ENCODE measurements at regions of chr15 and their contacts with region 1.

Region 1: GRCh38 chr15:72011302-72011942 is 106.5 kb downstream of the MYO9A start:
- DNase-seq: no peak
- H3K4me3 ChIP-seq: no peak overlapping the region
- H3K27ac ChIP-seq: no peak overlapping the region
- H3K4me1 ChIP-seq: no peaks in the 10 kb centered on the region
- H3K27me3 ChIP-seq: no peaks in the 10 kb centered on the region
- CTCF ChIP-seq: no peak
- POLR2A ChIP-seq: no peak

Region 2: GRCh38 chr15:71916834-71917233 is 94.6 kb before region 1 on chr15:
- intact Hi-C with region 1: no loop called
- DNase-seq: no peak
- H3K4me3 ChIP-seq: no peak overlapping the region
- H3K27ac ChIP-seq: no peak overlapping the region
- H3K4me1 ChIP-seq: no peaks in the 10 kb centered on the region
- H3K27me3 ChIP-seq: no peaks in the 10 kb centered on the region
- CTCF ChIP-seq: no peak
- POLR2A ChIP-seq: no peak

Region 3: DNA sequence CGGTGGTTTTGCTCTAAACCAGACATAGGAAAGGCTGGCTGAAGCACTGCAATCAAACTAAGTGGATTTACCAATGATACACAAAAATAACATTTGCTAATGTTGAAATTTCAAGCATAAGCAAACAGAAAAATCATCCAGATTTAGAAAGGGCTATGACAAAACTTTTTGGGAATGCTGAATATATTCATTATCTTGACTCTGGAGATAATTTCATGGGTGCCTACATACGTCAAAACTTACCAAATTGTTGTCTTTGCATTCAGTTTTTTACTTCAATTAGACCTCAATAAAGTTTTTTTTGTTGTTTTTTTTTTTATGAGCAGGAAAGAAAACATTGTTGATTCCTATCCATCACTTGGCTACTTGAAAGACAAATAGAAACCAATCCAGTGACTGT is 60.3 kb before region 1 on chr15:
- intact Hi-C with region 1: loop called (anchors 10 kb)
- DNase-seq: no peak
- H3K4me3 ChIP-seq: no peak overlapping the region
- H3K27ac ChIP-seq: no peak overlapping the region
- H3K4me1 ChIP-seq: no peaks in the 10 kb centered on the region
- H3K27me3 ChIP-seq: no peaks in the 10 kb centered on the region
- CTCF ChIP-seq: no peak
- POLR2A ChIP-seq: no peak

Measured in spleen (tissue), 13 donors.